Heart left ventricle (tissue), 16 donors: ENCODE measurements at regions of chr7 and their contacts with region 1.

Region 1: GRCh38 chr7:30412810-30413504 is 65.6 kb downstream of the NOD1 start:
- DNase-seq: peak in 1 of 5 donors; percentile 30
- ATAC-seq: peak; percentile 82 to 95 (median 92)
- H3K4me3 ChIP-seq: no peak overlapping the region
- H3K27ac ChIP-seq: no peak overlapping the region
- H3K4me1 ChIP-seq: peaks cover 0 to 14% (median 0%) of the 10 kb centered on the region in 12 donors
- H3K27me3 ChIP-seq: no peaks in the 10 kb centered on the region
- CTCF ChIP-seq: peak; percentile 26 to 77 (median 64)
- POLR2A ChIP-seq: no peak

Region 2: GRCh38 chr7:30284298-30285066 is 128.5 kb before region 1 on chr7 and contains the start of gene ZNRF2:
- intact Hi-C with region 1: loop called in 6 of 10 experiments (anchors 2 to 5 kb)
- DNase-seq: peak; percentile 98 to 100 (median 99)
- ATAC-seq: peak; percentile 96 to 99 (median 98)
- H3K4me3 ChIP-seq: peak within 1 kb of the TSS; percentile 54 to 98 (median 85)
- H3K27ac ChIP-seq: peak within 1 kb of the TSS; percentile 95 to 99 (median 98)
- H3K4me1 ChIP-seq: peaks cover 0 to 44% (median 23%) of the 10 kb centered on the region in 12 donors
- H3K27me3 ChIP-seq: no peaks in the 10 kb centered on the region
- CTCF ChIP-seq: peak; percentile 19 to 80 (median 54)
- POLR2A ChIP-seq: peak in 1 of 2 donors; percentile 79
- total RNA-seq, gene ZNRF2: 7.3 to 15.2 (median 10.9) TPM